Heart right ventricle (tissue), 16 donors: ENCODE measurements at regions of chr6 and their contacts with region 1.

Region 1: DNA sequence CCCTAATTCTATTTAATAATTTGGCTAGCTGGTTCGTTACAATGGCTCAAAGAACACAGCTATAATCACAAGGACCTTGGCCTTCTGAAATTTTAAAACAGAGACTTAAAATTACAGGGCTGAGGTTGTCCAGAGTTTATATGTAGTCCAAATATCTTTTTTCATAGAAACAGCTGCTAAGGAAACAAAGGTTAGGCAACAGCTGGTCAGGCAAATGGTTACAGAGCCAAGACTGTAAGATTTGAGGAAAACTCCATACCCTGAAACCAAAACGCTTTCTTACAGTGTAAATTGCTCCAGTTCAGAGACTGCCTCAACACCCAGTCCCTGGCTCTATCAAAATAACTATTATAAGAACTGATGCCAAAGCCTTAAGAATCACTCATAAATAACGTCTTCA is 9.7 kb upstream of the ARHGAP18 start:
- DNase-seq: no peak
- ATAC-seq: peak in 7 of 8 donors; percentile 27 to 79 (median 56)
- H3K4me3 ChIP-seq: no peak overlapping the region
- H3K27ac ChIP-seq: peak overlapping the region in 2 of 10 donors; percentile 4 to 15
- H3K4me1 ChIP-seq: peaks cover 0 to 26% (median under 1%) of the 10 kb centered on the region in 9 donors
- H3K27me3 ChIP-seq: no peaks in the 10 kb centered on the region
- CTCF ChIP-seq: no peak

Region 2: DNA sequence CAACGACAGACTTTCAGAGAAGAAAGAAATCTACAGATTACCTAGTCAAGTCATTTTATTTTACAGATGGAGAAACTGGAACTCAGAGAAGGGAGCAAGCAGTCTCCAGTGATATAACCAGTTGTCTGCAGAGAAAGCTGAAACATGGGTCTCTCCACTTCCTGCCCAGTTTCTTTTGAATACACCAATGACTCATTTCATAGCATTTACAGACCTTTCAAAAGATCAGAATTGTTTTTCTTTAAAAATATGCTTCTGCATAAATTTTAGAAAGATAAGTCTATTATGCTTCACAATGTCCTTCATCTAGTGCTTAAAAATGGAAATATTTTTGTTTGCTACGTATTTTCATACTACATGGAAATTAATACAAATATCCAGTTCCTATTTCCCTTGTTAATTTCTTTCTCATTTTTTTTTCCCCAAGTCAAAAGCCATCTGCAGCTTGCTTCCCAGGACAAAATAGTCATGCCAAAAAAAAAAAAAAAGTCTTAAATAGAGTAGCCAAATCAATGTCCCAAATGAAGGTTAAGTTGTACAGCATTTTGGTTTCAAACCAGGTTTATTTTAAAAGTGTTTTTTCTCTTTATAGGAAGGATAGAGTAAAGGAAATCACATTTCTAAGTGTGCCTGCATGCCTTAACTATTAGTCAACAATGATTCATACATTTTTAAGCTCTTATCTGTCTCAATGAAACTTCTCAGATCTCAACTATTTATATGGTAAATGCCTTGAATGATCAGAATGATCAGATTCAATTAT is 46.6 kb before region 1 on chr6:
- intact Hi-C with region 1: loop called in 3 of 10 experiments (anchors 5 to 10 kb)
- DNase-seq: no peak
- ATAC-seq: peak in 6 of 8 donors; percentile 60 to 76 (median 66)
- H3K4me3 ChIP-seq: peak overlapping the region in 1 of 10 donors; percentile 3
- H3K27ac ChIP-seq: peak overlapping the region in 9 of 10 donors; percentile 5 to 88 (median 63)
- H3K4me1 ChIP-seq: peaks cover 3 to 48% (median 29%) of the 10 kb centered on the region in 9 donors
- H3K27me3 ChIP-seq: no peaks in the 10 kb centered on the region
- CTCF ChIP-seq: no peak

Region 3: GRCh38 chr6:130148181-130148580 is 428.5 kb after region 1 on chr6:
- intact Hi-C with region 1: no loop called
- DNase-seq: no peak
- ATAC-seq: no peak
- H3K4me3 ChIP-seq: no peak overlapping the region
- H3K27ac ChIP-seq: no peak overlapping the region
- H3K4me1 ChIP-seq: no peaks in the 10 kb centered on the region
- H3K27me3 ChIP-seq: no peaks in the 10 kb centered on the region
- CTCF ChIP-seq: peak in 1 of 9 donors; percentile 23